PC-3 (cell line): ENCODE measurements at regions of chr2 and their contacts with region 1.

Region 1: GRCh38 chr2:27281855-27282559 is at the start of gene TRIM54:
- DNase-seq: peak; percentile 49
- ATAC-seq: peak; percentile 44
- H3K4me3 ChIP-seq: no peak within 1 kb of the TSS
- H3K27ac ChIP-seq: peak within 1 kb of the TSS; percentile 29; the same call in 1 of the 2 replicates
- H3K4me1 ChIP-seq: peaks cover 20% of the 10 kb centered on the region
- H3K27me3 ChIP-seq: no peaks in the 10 kb centered on the region
- CTCF ChIP-seq: no peak
- total RNA-seq, gene TRIM54: 0.51 and 1.6 TPM in 2 replicates

Region 2: DNA sequence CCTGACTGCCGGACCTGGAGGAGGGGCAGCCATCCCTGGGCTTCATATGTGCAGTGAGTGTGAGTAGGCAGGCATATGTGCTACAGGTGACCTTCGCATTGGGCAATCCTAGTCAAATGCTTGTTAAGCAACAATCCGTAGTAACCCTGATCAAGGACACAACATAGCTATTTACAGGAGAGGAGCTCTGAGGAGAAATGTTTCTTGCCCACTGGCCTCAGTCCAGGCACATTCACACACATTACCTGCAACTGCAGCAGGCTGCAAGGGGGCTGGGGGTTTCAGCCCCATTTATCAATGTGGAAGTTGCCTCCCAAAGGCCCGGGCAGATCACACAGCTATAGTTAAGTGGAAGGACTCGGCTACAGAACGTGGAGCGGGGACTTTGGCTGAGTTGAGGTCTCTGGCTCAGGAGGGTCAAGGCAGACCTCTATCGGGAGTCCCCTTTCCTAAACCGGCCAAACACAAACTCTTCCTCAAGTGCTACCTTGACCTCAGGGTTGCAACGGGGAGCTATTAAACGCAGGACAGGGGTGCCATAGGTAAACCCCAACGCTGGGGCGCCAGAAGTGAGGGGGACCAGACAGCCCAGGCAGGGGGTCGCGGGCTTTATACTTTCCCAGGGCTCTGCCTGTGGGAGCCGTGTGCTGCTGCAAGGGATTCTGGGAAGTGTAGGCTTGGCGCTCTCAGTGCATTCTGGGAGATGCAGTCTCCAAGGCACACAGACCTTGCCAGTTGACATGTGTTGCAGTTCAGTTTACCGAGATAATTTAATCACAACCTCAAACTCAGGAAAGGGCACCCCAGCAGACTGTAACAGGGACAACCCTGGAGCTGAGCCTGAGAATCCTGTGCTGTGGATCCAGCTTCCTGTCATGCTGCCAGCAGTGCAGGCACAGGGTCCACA is 186.0 kb before region 1 on chr2:
- CTCF ChIA-PET with region 1: no interaction called
- POLR2A ChIA-PET with region 1: no interaction called
- intact Hi-C with region 1: loop called (anchors 1 kb)
- DNase-seq: peak; percentile 23
- ATAC-seq: peak; percentile 36; the same call in 1 of the 2 replicates
- H3K4me3 ChIP-seq: no peak overlapping the region
- H3K27ac ChIP-seq: no peak overlapping the region
- H3K4me1 ChIP-seq: no peaks in the 10 kb centered on the region
- H3K27me3 ChIP-seq: no peaks in the 10 kb centered on the region
- CTCF ChIP-seq: no peak

Region 3: DNA sequence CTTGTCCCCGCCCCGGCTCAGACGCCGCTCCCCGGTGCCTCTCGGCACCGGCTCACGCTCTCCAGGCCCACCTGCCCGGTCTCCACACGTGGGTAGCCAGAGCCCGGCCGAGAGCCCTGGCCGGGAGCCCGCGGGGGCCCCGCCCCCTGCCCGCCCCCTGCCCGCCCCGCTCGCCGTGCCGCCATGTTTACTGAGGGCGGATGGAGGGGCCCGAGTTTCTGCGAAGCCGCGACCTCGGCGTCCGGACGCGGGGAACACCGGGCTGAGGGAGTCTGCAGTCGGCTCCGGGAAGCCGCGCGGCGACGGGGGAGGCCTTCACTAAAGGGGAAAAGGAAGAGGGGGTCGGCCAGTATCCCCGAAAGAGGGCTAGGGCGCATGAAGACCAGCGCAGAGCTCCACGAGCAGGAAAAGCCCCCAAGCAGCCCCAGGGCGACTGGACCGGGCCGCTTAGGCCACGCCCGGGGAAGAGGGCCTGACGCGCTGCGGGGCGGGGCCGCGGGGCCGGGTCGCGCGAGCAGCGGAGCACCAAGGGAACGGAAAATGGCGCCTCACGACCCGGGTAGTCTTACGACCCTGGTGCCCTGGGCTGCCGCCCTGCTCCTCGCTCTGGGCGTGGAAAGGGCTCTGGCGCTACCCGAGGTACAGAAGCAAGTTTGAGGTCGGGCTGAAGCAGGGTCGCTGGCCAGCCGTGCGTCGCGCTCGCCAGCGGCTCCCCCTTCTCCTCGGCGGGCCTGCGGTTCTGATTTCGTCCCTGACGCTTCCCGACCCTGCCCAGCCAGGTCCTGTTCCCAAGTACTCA is 70.0 kb before region 1 on chr2 and contains the starts of genes ATRAID and SLC5A6:
- CTCF ChIA-PET with region 1: no interaction called
- POLR2A ChIA-PET with region 1: interaction called, 3 read pairs
- intact Hi-C with region 1: loop called (anchors 5 kb)
- DNase-seq: peak; percentile 89
- ATAC-seq: peak; percentile 84
- H3K4me3 ChIP-seq: peak within 1 kb of the TSS; percentile 83
- H3K27ac ChIP-seq: peak within 1 kb of the TSS; percentile 81
- H3K4me1 ChIP-seq: peaks cover 23% of the 10 kb centered on the region
- H3K27me3 ChIP-seq: no peaks in the 10 kb centered on the region
- CTCF ChIP-seq: no peak
- total RNA-seq, gene ATRAID: 111 and 130 TPM in 2 replicates
- total RNA-seq, gene SLC5A6: 46.0 and 48.1 TPM in 2 replicates